ENCODE measurements at regions of chr2 and their contacts with region 1.

Region 1: DNA sequence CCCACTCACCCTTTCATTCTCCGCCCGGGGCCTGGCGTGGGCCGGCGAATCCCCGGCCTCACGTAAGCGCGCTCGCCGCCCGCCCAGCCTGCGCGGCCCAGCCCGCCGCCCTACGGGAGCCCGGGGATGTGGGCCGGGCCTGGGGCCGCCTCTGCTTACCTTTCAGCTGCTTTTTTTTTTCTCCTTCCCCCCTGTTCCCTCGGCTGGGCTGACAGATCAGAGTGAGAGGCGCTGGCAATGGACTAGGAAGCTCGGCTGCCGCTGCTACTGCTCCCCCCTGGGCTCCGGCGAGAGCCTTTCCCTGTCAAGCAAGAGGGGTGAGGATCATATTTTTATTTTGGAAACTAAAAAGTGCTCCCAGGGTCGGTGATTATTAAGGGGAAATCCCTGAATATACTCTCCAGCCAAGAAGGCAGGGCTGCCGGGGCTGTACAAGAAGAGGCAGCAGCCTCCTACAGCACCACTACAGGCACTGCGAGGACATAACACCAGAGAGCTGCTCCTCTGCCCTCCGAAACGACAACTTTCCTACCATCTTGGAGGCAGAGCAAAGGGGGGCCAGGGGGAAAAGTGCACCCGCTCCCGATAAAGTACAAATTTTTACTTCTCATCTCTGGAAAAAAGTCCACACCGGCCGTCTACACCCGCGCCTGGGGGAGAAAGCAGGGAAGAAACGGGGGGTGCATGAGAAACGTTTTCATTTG is at the start of gene INO80D:
- DNase-seq: peak; percentile 71 to 92 (median 90)
- ATAC-seq: peak; percentile 95
- H3K4me3 ChIP-seq: peak within 1 kb of the TSS; percentile 97
- H3K4me3 Mint-ChIP-seq: peak within 1 kb of the TSS; percentile 96 to 99 (median 98)
- H3K27ac ChIP-seq: peak within 1 kb of the TSS; percentile 97
- H3K27ac Mint-ChIP-seq: peak within 1 kb of the TSS; percentile 98 to 100 (median 100)
- H3K4me1 ChIP-seq: peaks cover 0 to 9% of the 10 kb centered on the region in 2 donors
- H3K4me1 Mint-ChIP-seq: peaks cover 25 to 61% (median 47%) of the 10 kb centered on the region in 7 donors
- H3K27me3 ChIP-seq: no peaks in the 10 kb centered on the region
- H3K27me3 Mint-ChIP-seq: no peaks in the 10 kb centered on the region
- total RNA-seq, gene INO80D: 30.7 to 50.9 (median 43.4) TPM

Region 2: DNA sequence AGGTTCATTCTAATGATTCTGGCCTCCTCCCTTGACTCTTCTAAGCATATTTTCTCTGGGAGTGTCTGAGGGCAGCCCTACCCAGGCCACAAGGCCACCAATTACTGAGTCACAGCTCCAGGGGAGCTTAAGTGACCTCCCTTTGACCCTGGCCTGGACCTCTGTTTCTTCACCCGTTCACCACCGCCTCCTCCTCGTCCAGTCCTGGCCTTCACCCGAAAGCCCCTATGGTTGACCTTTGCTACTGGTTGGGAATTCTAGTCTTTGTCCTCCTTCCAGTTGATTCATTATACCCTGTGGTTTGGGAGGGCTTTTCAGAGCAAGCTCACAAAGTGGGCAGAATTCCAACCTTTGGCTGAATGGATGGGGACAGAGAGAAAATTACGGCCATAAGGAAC is 331.0 kb before region 1 on chr2:
- CTCF ChIA-PET with region 1: no interaction called
- POLR2A ChIA-PET with region 1: no interaction called
- intact Hi-C with region 1: no loop called
- DNase-seq: no peak
- ATAC-seq: no peak
- H3K4me3 ChIP-seq: no peak overlapping the region
- H3K4me3 Mint-ChIP-seq: no peak overlapping the region
- H3K27ac ChIP-seq: no peak overlapping the region
- H3K27ac Mint-ChIP-seq: no peak overlapping the region
- H3K4me1 ChIP-seq: no peaks in the 10 kb centered on the region
- H3K4me1 Mint-ChIP-seq: peaks cover 0 to 2% (median 0%) of the 10 kb centered on the region in 7 donors
- H3K27me3 ChIP-seq: no peaks in the 10 kb centered on the region
- H3K27me3 Mint-ChIP-seq: peaks cover 4 to 22% (median 7%) of the 10 kb centered on the region in 5 donors

Region 3: GRCh38 chr2:205995260-205995659 is 90.6 kb before region 1 on chr2:
- CTCF ChIA-PET with region 1: no interaction called
- POLR2A ChIA-PET with region 1: no interaction called
- intact Hi-C with region 1: loop called in 1 of 2 experiments (anchors 5 kb)
- DNase-seq: no peak
- ATAC-seq: no peak
- H3K4me3 ChIP-seq: no peak overlapping the region
- H3K4me3 Mint-ChIP-seq: no peak overlapping the region
- H3K27ac ChIP-seq: no peak overlapping the region
- H3K27ac Mint-ChIP-seq: peak overlapping the region in 4 of 9 donors; percentile 10 to 65 (median 26)
- H3K4me1 ChIP-seq: no peaks in the 10 kb centered on the region
- H3K4me1 Mint-ChIP-seq: peaks cover 0 to 9% (median 3%) of the 10 kb centered on the region in 7 donors
- H3K27me3 ChIP-seq: no peaks in the 10 kb centered on the region
- H3K27me3 Mint-ChIP-seq: no peaks in the 10 kb centered on the region

Region 4: GRCh38 chr2:206040525-206040924 is 45.4 kb before region 1 on chr2:
- CTCF ChIA-PET with region 1: no interaction called
- POLR2A ChIA-PET with region 1: interaction called, 3 read pairs
- intact Hi-C with region 1: loop called in 1 of 2 experiments (anchors 5 kb)
- DNase-seq: no peak
- ATAC-seq: no peak
- H3K4me3 ChIP-seq: no peak overlapping the region
- H3K4me3 Mint-ChIP-seq: no peak overlapping the region
- H3K27ac ChIP-seq: no peak overlapping the region
- H3K27ac Mint-ChIP-seq: no peak overlapping the region
- H3K4me1 ChIP-seq: no peaks in the 10 kb centered on the region
- H3K4me1 Mint-ChIP-seq: peaks cover 2 to 47% (median 28%) of the 10 kb centered on the region in 7 donors
- H3K27me3 ChIP-seq: no peaks in the 10 kb centered on the region
- H3K27me3 Mint-ChIP-seq: no peaks in the 10 kb centered on the region

Region 5: GRCh38 chr2:206064077-206064476 is 21.8 kb before region 1 on chr2:
- CTCF ChIA-PET with region 1: no interaction called
- POLR2A ChIA-PET with region 1: interaction called, 5 read pairs
- intact Hi-C with region 1: loop called in 1 of 2 experiments (anchors 2 kb)
- DNase-seq: no peak
- ATAC-seq: peak; percentile 54
- H3K4me3 ChIP-seq: no peak overlapping the region
- H3K4me3 Mint-ChIP-seq: no peak overlapping the region
- H3K27ac ChIP-seq: no peak overlapping the region
- H3K27ac Mint-ChIP-seq: peak overlapping the region in 4 of 9 donors; percentile 19 to 81 (median 34)
- H3K4me1 ChIP-seq: no peaks in the 10 kb centered on the region
- H3K4me1 Mint-ChIP-seq: peaks cover 5 to 57% (median 52%) of the 10 kb centered on the region in 7 donors
- H3K27me3 ChIP-seq: no peaks in the 10 kb centered on the region
- H3K27me3 Mint-ChIP-seq: no peaks in the 10 kb centered on the region

Region 6: GRCh38 chr2:206274434-206275268 is 188.8 kb after region 1 on chr2 and contains the start of gene ZDBF2:
- CTCF ChIA-PET with region 1: interaction called, 3 read pairs
- POLR2A ChIA-PET with region 1: interaction called, 3 read pairs
- intact Hi-C with region 1: loop called (anchors 2 to 10 kb)
- DNase-seq: peak; percentile 29 to 70 (median 62)
- ATAC-seq: peak; percentile 80
- H3K4me3 ChIP-seq: peak within 1 kb of the TSS; percentile 56
- H3K4me3 Mint-ChIP-seq: peak within 1 kb of the TSS; percentile 85 to 94 (median 91)
- H3K27ac ChIP-seq: peak within 1 kb of the TSS; percentile 79
- H3K27ac Mint-ChIP-seq: peak within 1 kb of the TSS; percentile 85 to 96 (median 94)
- H3K4me1 ChIP-seq: peaks cover 8 to 14% of the 10 kb centered on the region in 2 donors
- H3K4me1 Mint-ChIP-seq: peaks cover 9 to 25% (median 20%) of the 10 kb centered on the region in 7 donors
- H3K27me3 ChIP-seq: peaks cover 0 to 6% of the 10 kb centered on the region in 2 donors
- H3K27me3 Mint-ChIP-seq: peaks cover 14 to 69% (median 51%) of the 10 kb centered on the region in 5 donors
- total RNA-seq, gene ZDBF2: 9.1 to 22.4 (median 16.0) TPM